ENCODE measurements at regions of chr16 and their contacts with region 1.

Region 1: DNA sequence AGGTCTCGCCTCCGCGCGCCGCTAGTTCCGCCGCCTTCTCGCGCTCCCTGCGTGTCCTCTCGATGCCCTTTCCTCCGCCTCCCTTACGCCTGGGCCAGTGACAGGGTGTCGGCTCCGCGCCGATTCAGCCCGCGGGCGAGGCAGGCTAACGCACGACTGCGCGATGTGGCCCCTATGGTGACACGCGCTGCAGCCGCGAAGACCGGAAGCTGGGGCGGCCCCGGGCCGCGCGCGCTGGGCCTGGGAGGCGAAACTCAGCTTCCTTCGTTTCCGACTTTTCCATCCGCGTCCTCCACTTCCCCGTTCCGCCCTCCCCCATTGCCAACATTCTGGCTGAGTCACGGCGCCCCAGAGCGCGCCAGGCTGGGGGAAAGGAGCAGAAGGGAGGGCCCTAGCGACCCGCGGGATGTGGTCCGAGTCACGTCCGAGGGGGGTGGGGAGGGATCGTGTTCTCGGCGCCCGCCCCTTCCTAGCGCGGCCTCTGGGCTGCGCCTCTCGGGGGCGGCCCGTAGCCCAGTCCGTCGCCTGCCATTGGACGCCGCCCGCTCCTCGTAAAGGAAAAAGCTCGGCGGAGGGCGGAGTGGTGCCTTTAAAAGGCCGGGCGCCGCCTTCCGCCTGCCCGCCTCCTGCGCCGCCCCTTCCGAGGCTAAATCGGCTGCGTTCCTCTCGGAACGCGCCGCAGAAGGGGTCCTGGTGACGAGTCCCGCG is at the start of gene ALDOA:
- DNase-seq: peak; percentile 94 to 99 (median 98)
- H3K4me3 ChIP-seq: peak within 1 kb of the TSS; percentile 67 to 100 (median 96)
- H3K27ac ChIP-seq: peak within 1 kb of the TSS; percentile 91 to 100 (median 100)
- H3K27me3 ChIP-seq: no peaks in the 10 kb centered on the region
- CTCF ChIP-seq: peak in 42 of 56 donors; percentile 5 to 56 (median 32)
- total RNA-seq, gene ALDOA: 996 to 2,428 (median 1,936) TPM

Region 2: DNA sequence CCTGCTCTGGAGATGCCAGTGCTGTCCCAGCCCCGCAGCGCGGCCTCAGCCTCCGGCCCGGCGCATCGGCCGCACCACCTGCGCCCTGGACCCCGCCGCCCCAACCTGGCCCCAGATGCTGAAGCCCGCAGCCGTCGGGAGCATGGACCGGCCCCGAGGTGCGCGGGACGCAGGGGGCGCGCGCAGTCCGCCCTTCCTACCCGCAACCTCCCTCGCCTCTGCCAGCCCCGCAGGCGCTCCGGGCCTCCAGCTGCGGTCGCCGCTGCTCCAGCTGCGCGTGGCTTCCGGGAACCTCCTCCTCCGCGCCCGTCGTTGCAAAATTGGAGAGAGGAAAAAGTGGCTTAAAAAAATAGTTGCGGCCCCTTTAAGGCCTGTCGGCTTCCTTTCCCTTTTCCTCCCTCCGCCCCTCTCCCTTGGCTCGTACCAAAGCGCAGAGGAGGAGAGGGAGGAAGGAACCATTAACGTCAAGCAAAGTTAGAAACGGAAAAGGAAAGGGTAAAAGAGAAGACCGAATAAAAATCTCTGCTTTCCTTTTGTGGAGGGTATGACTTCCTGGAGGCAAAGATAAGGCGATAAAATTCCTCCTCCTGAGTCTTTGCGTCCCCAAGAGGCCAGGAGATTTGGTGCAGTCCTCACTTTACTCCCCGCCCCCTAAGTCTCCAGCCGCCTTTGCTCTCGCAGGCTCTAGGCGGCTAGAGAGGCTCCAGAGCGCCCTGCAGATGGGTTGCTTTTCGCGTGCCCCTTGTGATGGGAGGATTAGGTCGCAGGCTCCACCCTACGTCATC is 202.2 kb before region 1 on chr16 and contains the start of gene CDIPT:
- intact Hi-C with region 1: no loop called
- DNase-seq: peak; percentile 83 to 97 (median 96)
- H3K4me3 ChIP-seq: peak within 1 kb of the TSS; percentile 64 to 100 (median 95)
- H3K27ac ChIP-seq: peak within 1 kb of the TSS; percentile 89 to 99 (median 97)
- H3K27me3 ChIP-seq: no peaks in the 10 kb centered on the region
- CTCF ChIP-seq: peak in 54 of 56 donors; percentile 29 to 84 (median 70)
- total RNA-seq, gene CDIPT: 63.9 to 118 (median 94.7) TPM

Region 3: GRCh38 chr16:30395155-30395991 is 330.1 kb after region 1 on chr16 and contains the start of gene ZNF48:
- intact Hi-C with region 1: loop called in 1 of 2 experiments (anchors 5 kb)
- DNase-seq: peak; percentile 78 to 95 (median 91)
- H3K4me3 ChIP-seq: peak within 1 kb of the TSS; percentile 64 to 99 (median 88)
- H3K27ac ChIP-seq: peak within 1 kb of the TSS; percentile 57 to 94 (median 83)
- H3K27me3 ChIP-seq: no peaks in the 10 kb centered on the region
- CTCF ChIP-seq: peak in 43 of 56 donors; percentile 5 to 73 (median 38)
- total RNA-seq, gene ZNF48: 10.1 to 24.9 (median 16.6) TPM

Measured in dorsolateral prefrontal cortex (tissue), 120 donors.